ENCODE measurements at regions of chr5 and their contacts with region 1.

Region 1: GRCh38 chr5:79857714-79858409 is 133.2 kb downstream of the MTX3 start:
- DNase-seq: peak; percentile 70
- ATAC-seq: peak; percentile 69
- H3K4me3 ChIP-seq: no peak overlapping the region
- H3K4me3 Mint-ChIP-seq: no peak overlapping the region
- H3K27ac ChIP-seq: no peak overlapping the region
- H3K27ac Mint-ChIP-seq: no peak overlapping the region
- H3K4me1 ChIP-seq: no peaks in the 10 kb centered on the region
- H3K4me1 Mint-ChIP-seq: no peaks in the 10 kb centered on the region
- H3K27me3 ChIP-seq: peaks cover 0 to 5% (median 0%) of the 10 kb centered on the region in 4 experiments
- H3K27me3 Mint-ChIP-seq: peaks cover 6% of the 10 kb centered on the region
- CTCF ChIP-seq: peak; percentile 95

Region 2: GRCh38 chr5:79552984-79553383 is 304.9 kb before region 1 on chr5:
- CTCF ChIA-PET with region 1: interaction called, 26 read pairs
- POLR2A ChIA-PET with region 1: no interaction called
- intact Hi-C with region 1: no loop called
- DNase-seq: no peak
- ATAC-seq: no peak
- H3K4me3 ChIP-seq: no peak overlapping the region
- H3K4me3 Mint-ChIP-seq: no peak overlapping the region
- H3K27ac ChIP-seq: no peak overlapping the region
- H3K27ac Mint-ChIP-seq: no peak overlapping the region
- H3K4me1 ChIP-seq: no peaks in the 10 kb centered on the region
- H3K4me1 Mint-ChIP-seq: peaks cover 2% of the 10 kb centered on the region
- H3K27me3 ChIP-seq: no peaks in the 10 kb centered on the region
- H3K27me3 Mint-ChIP-seq: no peaks in the 10 kb centered on the region
- CTCF ChIP-seq: no peak

Region 3: DNA sequence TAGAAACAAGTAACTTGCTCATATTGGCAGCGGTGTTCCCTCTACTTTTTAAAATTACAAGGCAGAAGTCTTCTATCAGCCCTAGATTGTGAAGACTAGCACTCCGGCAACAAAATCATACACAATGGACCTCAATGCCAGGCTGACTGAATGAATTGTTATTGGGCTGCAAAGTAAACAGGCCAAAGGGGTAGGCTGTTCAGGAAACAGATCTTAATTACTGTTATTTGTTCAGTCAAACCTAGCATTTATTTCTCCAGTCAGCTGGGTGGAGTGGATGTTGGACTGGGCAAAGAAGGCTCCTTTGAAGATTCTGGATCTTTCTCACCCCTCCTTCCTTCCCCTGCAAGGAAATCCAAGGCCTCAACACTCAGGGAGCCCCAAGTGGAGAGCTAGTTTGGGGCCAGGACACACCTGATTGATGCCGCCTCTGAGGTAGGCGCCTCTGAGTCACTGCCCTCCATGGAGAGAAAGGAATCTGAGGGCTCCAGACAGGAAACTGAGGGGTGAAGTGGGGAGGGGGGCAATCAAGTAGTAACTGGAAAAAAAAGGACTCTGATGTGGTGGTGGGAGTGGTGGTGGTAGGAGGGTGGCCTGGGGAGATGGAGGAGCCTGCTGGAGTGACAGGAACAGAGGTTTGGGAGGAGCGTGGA is 362.5 kb after region 1 on chr5:
- CTCF ChIA-PET with region 1: no interaction called
- POLR2A ChIA-PET with region 1: no interaction called
- intact Hi-C with region 1: no loop called
- DNase-seq: no peak
- ATAC-seq: no peak
- H3K4me3 ChIP-seq: no peak overlapping the region
- H3K4me3 Mint-ChIP-seq: no peak overlapping the region
- H3K27ac ChIP-seq: no peak overlapping the region
- H3K27ac Mint-ChIP-seq: no peak overlapping the region
- H3K4me1 ChIP-seq: peaks cover 0 to 3% of the 10 kb centered on the region in 2 donors
- H3K4me1 Mint-ChIP-seq: peaks cover 5% of the 10 kb centered on the region
- H3K27me3 ChIP-seq: no peaks in the 10 kb centered on the region
- H3K27me3 Mint-ChIP-seq: no peaks in the 10 kb centered on the region
- CTCF ChIP-seq: no peak

Measured in B cell (primary cell).